ENCODE measurements at regions of chr6 and their contacts with region 1.

Region 1: DNA sequence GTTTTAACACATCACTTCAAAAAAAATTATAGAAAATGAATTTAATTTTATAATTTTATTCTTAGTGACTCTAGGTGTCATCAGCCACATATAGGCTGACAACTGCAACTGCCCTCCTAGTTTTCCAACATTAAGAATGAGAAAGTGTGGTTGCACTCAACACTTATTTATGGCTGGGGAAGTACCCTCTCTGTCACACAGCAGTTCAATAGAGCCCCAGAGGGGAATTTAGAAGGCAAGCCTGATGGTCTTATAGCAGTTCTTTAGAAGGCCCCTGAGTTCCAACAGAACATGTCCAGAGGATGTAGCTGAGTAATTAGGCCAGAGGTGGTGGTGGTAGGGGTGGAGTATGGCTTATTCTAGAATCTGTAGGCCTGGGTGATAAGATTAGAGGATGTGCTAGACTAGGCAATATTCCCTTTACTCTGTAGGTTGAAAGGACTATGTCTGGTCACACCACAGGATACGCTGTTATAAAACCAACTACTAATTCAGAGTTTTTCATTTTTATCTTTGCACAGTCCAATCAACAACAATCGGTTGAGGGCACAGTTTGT is 226.5 kb upstream of the CITED2 start:
- DNase-seq: peak; percentile 15
- ATAC-seq: peak; percentile 93
- H3K4me3 Mint-ChIP-seq: no peak overlapping the region
- H3K27ac Mint-ChIP-seq: peak overlapping the region; percentile 33
- H3K4me1 Mint-ChIP-seq: peaks cover 10% of the 10 kb centered on the region
- H3K27me3 Mint-ChIP-seq: peaks cover 5% of the 10 kb centered on the region

Region 2: DNA sequence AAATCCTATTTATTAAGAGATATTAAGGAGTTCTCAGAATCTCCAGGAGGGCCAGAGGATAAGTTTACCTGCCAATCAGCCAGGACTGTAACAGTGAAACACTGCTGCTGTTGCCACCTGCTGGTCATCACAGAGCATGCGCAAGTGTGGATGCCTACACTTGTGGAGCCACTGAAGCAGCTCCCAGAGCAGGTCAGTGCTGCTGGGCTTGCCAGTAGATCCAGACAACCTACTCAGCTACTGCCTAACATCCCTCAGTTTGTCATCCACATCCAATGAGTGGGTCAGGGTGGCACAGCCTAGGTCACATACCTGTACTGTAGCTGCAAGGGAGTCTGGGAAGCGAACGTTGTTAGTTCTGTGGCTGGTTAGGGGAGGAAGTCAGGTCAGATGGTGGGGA is 1083.4 kb before region 1 on chr6:
- CTCF ChIA-PET with region 1: no interaction called
- POLR2A ChIA-PET with region 1: interaction called, 14 read pairs
- intact Hi-C with region 1: no loop called
- DNase-seq: peak; percentile 72
- ATAC-seq: peak; percentile 86
- H3K4me3 Mint-ChIP-seq: no peak overlapping the region
- H3K27ac Mint-ChIP-seq: no peak overlapping the region
- H3K4me1 Mint-ChIP-seq: peaks cover 9% of the 10 kb centered on the region
- H3K27me3 Mint-ChIP-seq: no peaks in the 10 kb centered on the region